Mammary epithelial cell (primary cell): ENCODE measurements at regions of chr11 and their contacts with region 1.

Region 1: GRCh38 chr11:94417386-94417987 is 16.3 kb upstream of the GPR83 start:
- DNase-seq: peak; percentile 16
- H3K4me3 ChIP-seq: no peak overlapping the region
- H3K27ac ChIP-seq: no peak overlapping the region
- H3K4me1 ChIP-seq: no peaks in the 10 kb centered on the region
- H3K27me3 ChIP-seq: no peaks in the 10 kb centered on the region
- CTCF ChIP-seq: peak; percentile 47 to 71

Region 2: GRCh38 chr11:94171693-94172440 is 245.6 kb before region 1 on chr11:
- CTCF ChIA-PET with region 1: no interaction called
- dilution Hi-C with region 1: no loop called
- in situ Hi-C with region 1: no loop called
- intact Hi-C with region 1: loop called (anchors 1 kb)
- DNase-seq: peak; percentile 10
- H3K4me3 ChIP-seq: no peak overlapping the region
- H3K27ac ChIP-seq: no peak overlapping the region
- H3K4me1 ChIP-seq: peaks cover 8% of the 10 kb centered on the region
- H3K27me3 ChIP-seq: no peaks in the 10 kb centered on the region
- CTCF ChIP-seq: peak; percentile 67 to 73

Region 3: GRCh38 chr11:94183886-94184264 is 233.6 kb before region 1 on chr11:
- CTCF ChIA-PET with region 1: no interaction called
- dilution Hi-C with region 1: no loop called
- in situ Hi-C with region 1: no loop called
- intact Hi-C with region 1: loop called (anchors 1 kb)
- DNase-seq: peak; percentile 48
- H3K4me3 ChIP-seq: no peak overlapping the region
- H3K27ac ChIP-seq: no peak overlapping the region
- H3K4me1 ChIP-seq: no peaks in the 10 kb centered on the region
- H3K27me3 ChIP-seq: no peaks in the 10 kb centered on the region
- CTCF ChIP-seq: peak; percentile 94 to 96

Region 4: DNA sequence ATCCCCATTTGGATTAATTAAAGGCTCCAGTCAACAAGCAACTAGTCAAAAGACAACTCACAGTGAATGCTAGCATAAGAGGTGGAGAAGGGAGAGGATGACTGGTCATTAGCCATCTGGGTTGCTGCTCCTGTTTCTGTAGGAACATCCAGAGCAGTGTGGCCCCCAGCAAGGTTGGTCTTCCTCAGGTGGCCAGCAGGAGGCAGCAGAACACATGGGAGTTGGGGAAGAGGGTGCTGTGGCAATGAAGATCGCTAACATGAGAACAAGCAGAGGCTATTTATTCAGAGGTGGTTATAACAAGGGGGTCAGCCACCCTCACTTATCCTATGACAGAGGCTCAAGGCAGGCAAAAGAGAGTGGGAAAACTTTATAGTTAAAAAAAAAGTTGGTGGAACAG is 91.8 kb before region 1 on chr11:
- CTCF ChIA-PET with region 1: no interaction called
- dilution Hi-C with region 1: no loop called
- in situ Hi-C with region 1: no loop called
- intact Hi-C with region 1: loop called (anchors 2 kb)
- DNase-seq: peak; percentile 30
- H3K4me3 ChIP-seq: no peak overlapping the region
- H3K27ac ChIP-seq: no peak overlapping the region
- H3K4me1 ChIP-seq: no peaks in the 10 kb centered on the region
- H3K27me3 ChIP-seq: no peaks in the 10 kb centered on the region
- CTCF ChIP-seq: peak; percentile 65 to 69